ENCODE measurements at regions of chr7 and their contacts with region 1.

Region 1: DNA sequence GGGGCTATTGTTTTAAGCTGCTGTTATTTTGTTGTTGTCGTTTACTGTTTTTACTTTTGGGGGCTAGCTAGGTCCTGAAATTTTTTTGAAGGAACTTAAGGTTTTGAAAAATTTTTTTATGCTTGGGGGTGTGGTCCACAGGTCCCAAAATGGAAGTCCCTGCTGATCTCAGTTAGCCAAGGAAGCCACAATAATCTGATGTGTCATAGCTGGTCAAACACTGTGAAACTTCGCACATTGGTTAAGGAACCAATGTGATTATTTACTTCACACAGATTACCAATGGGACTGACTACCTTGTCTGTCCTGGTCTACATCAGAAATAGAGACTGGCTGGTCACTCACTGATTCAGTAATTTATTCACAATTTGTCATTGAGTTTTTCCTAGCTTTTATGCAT is 29.5 kb upstream of the HYCC1 start:
- DNase-seq: no peak
- ATAC-seq: no peak
- H3K4me3 ChIP-seq: no peak overlapping the region
- H3K4me3 Mint-ChIP-seq: no peak overlapping the region
- H3K27ac ChIP-seq: no peak overlapping the region
- H3K27ac Mint-ChIP-seq: no peak overlapping the region
- H3K4me1 ChIP-seq: no peaks in the 10 kb centered on the region
- H3K4me1 Mint-ChIP-seq: no peaks in the 10 kb centered on the region
- H3K27me3 ChIP-seq: no peaks in the 10 kb centered on the region
- H3K27me3 Mint-ChIP-seq: no peaks in the 10 kb centered on the region
- CTCF ChIP-seq: no peak

Region 2: GRCh38 chr7:22776964-22777363 is 266.5 kb before region 1 on chr7:
- CTCF ChIA-PET with region 1: no interaction called
- POLR2A ChIA-PET with region 1: no interaction called
- intact Hi-C with region 1: loop called in 1 of 2 experiments (anchors 2 kb)
- DNase-seq: no peak
- ATAC-seq: no peak
- H3K4me3 ChIP-seq: no peak overlapping the region
- H3K4me3 Mint-ChIP-seq: no peak overlapping the region
- H3K27ac ChIP-seq: no peak overlapping the region
- H3K27ac Mint-ChIP-seq: no peak overlapping the region
- H3K4me1 ChIP-seq: no peaks in the 10 kb centered on the region
- H3K4me1 Mint-ChIP-seq: no peaks in the 10 kb centered on the region
- H3K27me3 ChIP-seq: peaks cover 0 to 5% of the 10 kb centered on the region in 2 experiments
- H3K27me3 Mint-ChIP-seq: peaks cover 10% of the 10 kb centered on the region
- CTCF ChIP-seq: no peak

Region 3: DNA sequence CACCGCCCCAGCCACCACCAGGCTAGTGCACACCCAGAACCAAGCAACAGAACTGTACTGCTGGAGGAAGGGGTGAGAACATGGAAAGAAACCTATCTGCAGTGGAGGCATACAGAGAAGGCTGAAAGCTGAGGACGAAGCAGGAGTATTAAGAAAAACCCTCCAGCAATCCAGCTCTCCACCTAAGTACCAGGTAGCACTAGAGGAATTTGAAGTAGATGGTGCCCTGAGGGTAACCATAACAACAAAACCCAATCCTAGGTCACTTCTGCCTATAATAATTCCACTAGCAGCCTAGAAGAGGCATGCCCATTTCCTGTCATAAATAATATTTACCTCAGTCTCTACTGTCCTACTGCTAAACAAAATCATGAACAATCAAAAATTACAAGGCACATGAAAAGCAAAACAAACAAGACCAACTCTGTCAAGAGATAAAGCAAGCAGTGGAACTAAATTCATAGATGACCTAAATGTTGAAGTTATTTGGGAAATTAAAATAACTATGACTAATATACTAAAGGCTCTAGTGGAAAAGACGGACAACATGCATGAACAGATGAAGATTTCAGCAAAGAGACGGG is 80.6 kb before region 1 on chr7:
- CTCF ChIA-PET with region 1: no interaction called
- POLR2A ChIA-PET with region 1: no interaction called
- intact Hi-C with region 1: no loop called
- DNase-seq: no peak
- ATAC-seq: no peak
- H3K4me3 ChIP-seq: no peak overlapping the region
- H3K4me3 Mint-ChIP-seq: no peak overlapping the region
- H3K27ac ChIP-seq: no peak overlapping the region
- H3K27ac Mint-ChIP-seq: no peak overlapping the region
- H3K4me1 ChIP-seq: no peaks in the 10 kb centered on the region
- H3K4me1 Mint-ChIP-seq: no peaks in the 10 kb centered on the region
- H3K27me3 ChIP-seq: no peaks in the 10 kb centered on the region
- H3K27me3 Mint-ChIP-seq: no peaks in the 10 kb centered on the region
- CTCF ChIP-seq: no peak